Mammary epithelial cell (primary cell): ENCODE measurements at regions of chr2 and their contacts with region 1.

Region 1: GRCh38 chr2:34012715-34013302 is 413.7 kb upstream of the FAM98A start:
- DNase-seq: peak; percentile 28
- H3K4me3 ChIP-seq: no peak overlapping the region
- H3K27ac ChIP-seq: no peak overlapping the region
- H3K4me1 ChIP-seq: no peaks in the 10 kb centered on the region
- H3K27me3 ChIP-seq: no peaks in the 10 kb centered on the region
- CTCF ChIP-seq: peak; percentile 78 to 83

Region 2: GRCh38 chr2:33909945-33910695 is 102.7 kb before region 1 on chr2:
- CTCF ChIA-PET with region 1: no interaction called
- dilution Hi-C with region 1: no loop called
- in situ Hi-C with region 1: no loop called
- intact Hi-C with region 1: no loop called
- DNase-seq: no peak
- H3K4me3 ChIP-seq: no peak overlapping the region
- H3K27ac ChIP-seq: no peak overlapping the region
- H3K4me1 ChIP-seq: no peaks in the 10 kb centered on the region
- H3K27me3 ChIP-seq: no peaks in the 10 kb centered on the region
- CTCF ChIP-seq: no peak

Region 3: GRCh38 chr2:35000453-35000852 is 987.6 kb after region 1 on chr2:
- CTCF ChIA-PET with region 1: no interaction called
- dilution Hi-C with region 1: no loop called
- in situ Hi-C with region 1: no loop called
- intact Hi-C with region 1: no loop called
- DNase-seq: no peak
- H3K4me3 ChIP-seq: no peak overlapping the region
- H3K27ac ChIP-seq: no peak overlapping the region
- H3K4me1 ChIP-seq: no peaks in the 10 kb centered on the region
- H3K27me3 ChIP-seq: no peaks in the 10 kb centered on the region
- CTCF ChIP-seq: no peak

Region 4: DNA sequence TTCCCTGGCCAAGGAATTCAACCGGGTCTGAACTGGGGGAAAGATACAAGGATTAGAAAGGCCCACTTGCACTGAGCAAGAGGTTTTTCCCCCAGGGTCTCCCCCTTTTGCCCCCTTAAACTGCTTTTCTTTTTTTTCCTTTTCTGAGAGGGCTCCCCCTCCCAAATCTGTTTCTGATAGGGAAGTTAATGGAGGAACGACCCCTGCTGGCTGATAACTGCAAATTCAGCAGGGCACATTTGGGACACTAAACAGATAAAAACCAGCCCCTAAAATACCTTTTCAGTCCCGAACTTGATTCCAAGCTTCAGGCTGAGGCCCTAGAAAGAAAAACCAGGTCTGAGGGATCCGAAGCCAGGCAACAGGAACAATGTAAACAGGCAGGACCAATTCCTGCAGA is 1330.3 kb after region 1 on chr2:
- CTCF ChIA-PET with region 1: no interaction called
- dilution Hi-C with region 1: no loop called
- in situ Hi-C with region 1: no loop called
- intact Hi-C with region 1: loop called (anchors 5 kb)
- DNase-seq: no peak
- H3K4me3 ChIP-seq: no peak overlapping the region
- H3K27ac ChIP-seq: no peak overlapping the region
- H3K4me1 ChIP-seq: no peaks in the 10 kb centered on the region
- H3K27me3 ChIP-seq: no peaks in the 10 kb centered on the region
- CTCF ChIP-seq: peak; percentile 25 to 49